ENCODE measurements at regions of chr12 and their contacts with region 1.

Region 1: GRCh38 chr12:107093417-107094182 is at the start of gene CRY1:
- DNase-seq: peak; percentile 94
- ATAC-seq: peak; percentile 84
- H3K4me3 ChIP-seq: peak within 1 kb of the TSS; percentile 74
- H3K27ac ChIP-seq: peak within 1 kb of the TSS; percentile 87
- H3K4me1 ChIP-seq: no peaks in the 10 kb centered on the region; the same call in 1 of the 2 replicates
- H3K27me3 ChIP-seq: no peaks in the 10 kb centered on the region
- CTCF ChIP-seq: no peak
- POLR2A ChIP-seq: peak; percentile 97
- RAD21 ChIP-seq: no peak
- total RNA-seq, gene CRY1: 5.9 and 9.7 TPM in 2 replicates

Region 2: DNA sequence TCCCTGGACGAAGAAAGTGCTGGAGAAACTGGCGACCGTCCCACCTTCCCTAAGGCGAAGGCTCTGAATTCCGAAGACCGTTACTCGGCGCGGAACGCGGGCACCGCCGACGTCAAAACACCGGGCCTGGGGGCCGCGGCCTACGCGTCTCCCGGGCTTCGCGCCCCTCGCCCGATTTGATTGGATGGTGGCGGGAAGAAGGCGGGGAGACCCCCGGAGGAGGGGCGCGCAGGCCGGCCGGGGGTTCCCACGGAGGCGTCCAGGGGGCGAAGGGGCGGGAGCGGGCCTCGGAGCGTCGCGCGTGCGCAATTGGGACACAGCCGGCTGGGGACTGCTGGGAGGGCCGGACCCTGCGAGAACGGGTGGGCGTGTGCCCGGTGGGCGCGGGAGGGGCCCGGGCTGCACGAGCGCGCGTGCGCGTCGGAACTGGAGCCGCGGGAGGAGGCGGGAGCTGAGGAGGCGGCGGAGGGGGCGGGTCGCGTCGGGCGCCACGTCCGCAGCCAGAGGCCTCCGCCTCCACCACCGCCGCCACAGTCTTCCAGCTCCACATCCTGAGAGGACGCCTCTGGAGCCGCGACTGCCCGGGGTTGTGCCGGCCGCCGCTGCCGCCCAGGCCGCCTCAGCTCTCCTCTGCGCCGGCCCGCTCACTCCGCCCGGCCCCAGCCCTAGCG is 138.1 kb before region 1 on chr12 and contains the start of gene TMEM263:
- CTCF ChIA-PET with region 1: no interaction called
- POLR2A ChIA-PET with region 1: no interaction called
- dilution Hi-C with region 1: no loop called
- in situ Hi-C with region 1: no loop called
- intact Hi-C with region 1: loop called (anchors 1 kb)
- DNase-seq: peak; percentile 95
- ATAC-seq: peak; percentile 86
- H3K4me3 ChIP-seq: peak within 1 kb of the TSS; percentile 85
- H3K27ac ChIP-seq: peak within 1 kb of the TSS; percentile 90
- H3K4me1 ChIP-seq: peaks cover 4% of the 10 kb centered on the region
- H3K27me3 ChIP-seq: no peaks in the 10 kb centered on the region
- CTCF ChIP-seq: no peak
- POLR2A ChIP-seq: peak; percentile 97
- RAD21 ChIP-seq: no peak
- total RNA-seq, gene TMEM263: 99.7 and 154 TPM in 2 replicates

Region 3: GRCh38 chr12:106986625-106987430 is 106.8 kb before region 1 on chr12 and contains the start of gene MTERF2:
- CTCF ChIA-PET with region 1: interaction called, 3 read pairs
- POLR2A ChIA-PET with region 1: interaction called, 6 read pairs
- dilution Hi-C with region 1: no loop called
- in situ Hi-C with region 1: no loop called
- intact Hi-C with region 1: loop called (anchors 1 kb)
- DNase-seq: peak; percentile 90
- ATAC-seq: peak; percentile 97
- H3K4me3 ChIP-seq: peak within 1 kb of the TSS; percentile 95
- H3K27ac ChIP-seq: peak within 1 kb of the TSS; percentile 93
- H3K4me1 ChIP-seq: peaks cover 13% of the 10 kb centered on the region
- H3K27me3 ChIP-seq: no peaks in the 10 kb centered on the region
- CTCF ChIP-seq: no peak
- POLR2A ChIP-seq: peak; percentile 77
- RAD21 ChIP-seq: no peak
- total RNA-seq, gene MTERF2: 3.0 and 3.3 TPM in 2 replicates

Region 4: DNA sequence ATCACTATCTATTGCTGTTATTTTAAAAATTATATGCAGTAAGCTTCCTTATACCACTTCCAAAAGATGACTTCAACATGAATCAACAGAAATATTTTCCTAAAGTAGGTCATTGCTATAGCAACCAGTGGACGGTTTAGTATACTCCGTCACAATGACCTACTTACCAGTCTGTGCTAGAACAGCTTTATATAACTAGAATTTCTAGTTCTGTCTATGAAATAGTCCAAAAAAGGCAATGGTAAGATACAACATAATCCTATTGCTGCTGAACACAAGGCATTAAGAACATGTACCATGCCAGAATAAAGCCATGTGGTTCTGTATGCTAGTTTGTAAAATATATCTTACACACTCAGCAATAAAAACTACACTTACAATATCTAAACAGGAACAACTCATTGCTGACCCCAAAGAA is 66.0 kb before region 1 on chr12:
- CTCF ChIA-PET with region 1: no interaction called
- POLR2A ChIA-PET with region 1: no interaction called
- dilution Hi-C with region 1: no loop called
- in situ Hi-C with region 1: no loop called
- intact Hi-C with region 1: loop called (anchors 2 kb)
- DNase-seq: peak; percentile 96
- ATAC-seq: peak; percentile 98
- H3K4me3 ChIP-seq: no peak overlapping the region
- H3K27ac ChIP-seq: no peak overlapping the region
- H3K4me1 ChIP-seq: peaks cover 5% of the 10 kb centered on the region; the same call in 1 of the 2 replicates
- H3K27me3 ChIP-seq: no peaks in the 10 kb centered on the region
- CTCF ChIP-seq: no peak
- POLR2A ChIP-seq: peak; percentile 72
- RAD21 ChIP-seq: no peak

Region 5: GRCh38 chr12:107109741-107110719 is 16.4 kb after region 1 on chr12:
- CTCF ChIA-PET with region 1: interaction called, 14 read pairs
- POLR2A ChIA-PET with region 1: interaction called, 3 read pairs
- dilution Hi-C with region 1: no loop called
- in situ Hi-C with region 1: no loop called
- intact Hi-C with region 1: no loop called
- DNase-seq: no peak
- ATAC-seq: no peak
- H3K4me3 ChIP-seq: no peak overlapping the region
- H3K27ac ChIP-seq: no peak overlapping the region
- H3K4me1 ChIP-seq: no peaks in the 10 kb centered on the region
- H3K27me3 ChIP-seq: peaks cover 26% of the 10 kb centered on the region
- CTCF ChIP-seq: no peak
- POLR2A ChIP-seq: no peak
- RAD21 ChIP-seq: no peak

Region 6: DNA sequence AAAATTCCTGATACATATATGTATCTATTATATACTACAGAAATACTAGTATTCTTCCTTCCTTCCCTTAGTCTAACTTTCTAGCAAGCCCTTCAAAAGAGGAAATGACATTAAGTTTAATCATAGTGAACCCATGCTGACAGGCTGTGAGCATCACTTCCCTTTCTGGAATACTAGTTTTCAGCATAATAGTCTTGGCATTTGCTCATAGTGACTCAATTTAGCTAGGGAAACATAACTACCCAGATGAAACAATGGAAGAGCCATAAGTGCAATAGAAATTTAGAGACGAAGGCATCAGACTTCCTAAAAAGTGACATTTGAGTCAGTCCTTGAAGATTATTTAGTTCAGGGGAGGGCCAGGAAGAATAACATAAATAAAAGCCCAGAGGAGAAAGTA is 184.3 kb after region 1 on chr12:
- CTCF ChIA-PET with region 1: no interaction called
- POLR2A ChIA-PET with region 1: no interaction called
- dilution Hi-C with region 1: no loop called
- in situ Hi-C with region 1: no loop called
- intact Hi-C with region 1: no loop called
- DNase-seq: peak; percentile 84
- ATAC-seq: no peak; the same call in 1 of the 2 replicates
- H3K4me3 ChIP-seq: no peak overlapping the region
- H3K27ac ChIP-seq: no peak overlapping the region
- H3K4me1 ChIP-seq: no peaks in the 10 kb centered on the region
- H3K27me3 ChIP-seq: no peaks in the 10 kb centered on the region
- CTCF ChIP-seq: no peak
- POLR2A ChIP-seq: no peak
- RAD21 ChIP-seq: no peak

Measured in IMR-90 (cell line).